Esophagus muscularis mucosa (tissue), 4 donors: ENCODE measurements at regions of chr19 and their contacts with region 1.

Region 1: DNA sequence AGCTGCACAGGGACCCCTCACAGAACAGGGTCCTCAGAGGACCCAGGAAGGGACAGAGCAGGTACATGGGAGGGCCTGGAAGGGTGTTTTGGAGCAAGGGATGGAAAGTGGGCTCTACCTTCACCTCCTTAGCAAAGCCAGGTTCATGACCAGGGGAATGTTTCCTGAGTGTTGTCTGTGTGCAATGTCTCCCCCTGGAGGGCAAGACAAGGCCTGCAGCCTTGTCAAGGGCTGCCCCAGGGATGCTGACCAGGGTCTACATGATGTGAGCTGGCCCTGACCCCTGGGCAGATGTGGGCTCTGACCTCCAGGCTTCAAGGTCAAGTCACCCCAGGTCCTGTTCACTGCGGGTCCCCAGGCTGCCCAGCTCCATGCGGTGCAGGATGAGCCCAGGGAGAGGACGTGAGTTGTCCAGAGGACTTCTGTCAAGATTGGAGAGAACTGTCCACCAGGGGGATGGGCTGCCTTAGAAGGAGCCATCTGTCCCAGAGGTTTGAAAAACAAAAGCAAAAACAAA is 1.0 kb upstream of the CEACAM1 start:
- DNase-seq: no peak
- H3K4me3 ChIP-seq: no peak overlapping the region
- H3K27ac ChIP-seq: peak overlapping the region in 1 of 4 donors; percentile 39
- H3K4me1 ChIP-seq: peaks cover 9 to 13% (median 12%) of the 10 kb centered on the region in 4 donors
- H3K27me3 ChIP-seq: no peaks in the 10 kb centered on the region
- CTCF ChIP-seq: peak; percentile 62 to 78 (median 65)
- EP300 ChIP-seq: no peak
- POLR2A ChIP-seq: no peak

Region 2: GRCh38 chr19:42450314-42450934 is 78.9 kb before region 1 on chr19:
- intact Hi-C with region 1: loop called (anchors 2 kb)
- DNase-seq: peak; percentile 93
- H3K4me3 ChIP-seq: no peak overlapping the region
- H3K27ac ChIP-seq: peak overlapping the region in 1 of 4 donors; percentile 36
- H3K4me1 ChIP-seq: peaks cover 0 to 6% (median 2%) of the 10 kb centered on the region in 4 donors
- H3K27me3 ChIP-seq: no peaks in the 10 kb centered on the region
- CTCF ChIP-seq: peak; percentile 75 to 88 (median 86)
- EP300 ChIP-seq: no peak
- POLR2A ChIP-seq: no peak

Region 3: GRCh38 chr19:42697884-42698283 is 168.6 kb after region 1 on chr19:
- intact Hi-C with region 1: no loop called
- DNase-seq: no peak
- H3K4me3 ChIP-seq: no peak overlapping the region
- H3K27ac ChIP-seq: no peak overlapping the region
- H3K4me1 ChIP-seq: no peaks in the 10 kb centered on the region
- H3K27me3 ChIP-seq: peaks cover 0 to 36% (median 4%) of the 10 kb centered on the region in 4 donors
- CTCF ChIP-seq: no peak
- EP300 ChIP-seq: no peak
- POLR2A ChIP-seq: no peak